A549 (cell line): ENCODE measurements at regions of chr17 and their contacts with region 1.

Region 1: DNA sequence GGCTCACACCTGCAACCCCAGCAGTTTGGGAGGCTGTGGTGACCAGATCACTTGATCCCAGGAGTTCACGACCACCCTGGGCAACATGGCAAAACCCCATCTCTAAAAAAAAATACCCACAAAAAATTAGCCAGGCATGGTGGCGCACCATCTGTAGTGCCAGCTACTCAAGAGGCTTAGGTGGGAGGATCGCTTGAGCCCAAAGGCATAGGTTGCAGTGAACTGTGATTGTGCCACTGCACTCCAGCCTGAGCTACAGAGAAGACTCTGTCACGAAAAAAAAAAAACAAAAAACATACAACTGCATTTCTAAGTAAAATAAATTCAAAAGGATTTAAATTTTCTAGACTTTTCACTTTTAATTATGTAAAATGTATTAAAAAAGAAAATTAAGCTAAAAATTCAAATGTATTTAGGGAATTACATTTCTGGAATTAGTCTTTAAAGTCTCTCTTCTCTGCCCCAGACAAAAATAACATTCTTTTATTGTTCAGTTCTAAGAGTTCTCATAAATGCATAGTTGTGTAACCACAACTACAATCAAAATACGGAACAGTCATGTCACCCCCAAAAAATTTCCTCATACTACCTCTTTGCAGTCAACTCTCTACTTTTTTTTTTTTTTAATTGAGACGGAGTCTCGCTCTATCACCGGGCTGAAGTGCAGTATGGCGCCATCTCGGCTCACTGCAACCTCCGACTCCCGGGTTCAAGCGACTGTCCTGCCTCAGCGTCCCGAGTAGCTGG is 14.1 kb downstream of the FAM222B start:
- DNase-seq: no peak
- ATAC-seq: no peak; a peak in 1 of 6 replicates
- H3K4me3 ChIP-seq: no peak overlapping the region
- H3K27ac ChIP-seq: no peak overlapping the region
- H3K4me1 ChIP-seq: no peaks in the 10 kb centered on the region
- CTCF ChIP-seq: no peak
- EP300 ChIP-seq: no peak
- POLR2A ChIP-seq: no peak
- RAD21 ChIP-seq: no peak

Region 2: GRCh38 chr17:28812091-28812747 is 16.2 kb before region 1 on chr17:
- CTCF ChIA-PET with region 1: interaction called, 10 read pairs
- POLR2A ChIA-PET with region 1: interaction called, 3 read pairs
- DNase-seq: peak; percentile 97 to 100
- ATAC-seq: peak; percentile 97 to 98
- H3K4me3 ChIP-seq: peak overlapping the region; percentile 73
- H3K27ac ChIP-seq: peak overlapping the region; percentile 89 to 94
- H3K4me1 ChIP-seq: peaks cover 46% of the 10 kb centered on the region
- CTCF ChIP-seq: no peak
- EP300 ChIP-seq: no peak
- POLR2A ChIP-seq: peak; percentile 54
- RAD21 ChIP-seq: no peak